OCI-LY7 (cell line): ENCODE measurements at regions of chr4 and their contacts with region 1.

Region 1: DNA sequence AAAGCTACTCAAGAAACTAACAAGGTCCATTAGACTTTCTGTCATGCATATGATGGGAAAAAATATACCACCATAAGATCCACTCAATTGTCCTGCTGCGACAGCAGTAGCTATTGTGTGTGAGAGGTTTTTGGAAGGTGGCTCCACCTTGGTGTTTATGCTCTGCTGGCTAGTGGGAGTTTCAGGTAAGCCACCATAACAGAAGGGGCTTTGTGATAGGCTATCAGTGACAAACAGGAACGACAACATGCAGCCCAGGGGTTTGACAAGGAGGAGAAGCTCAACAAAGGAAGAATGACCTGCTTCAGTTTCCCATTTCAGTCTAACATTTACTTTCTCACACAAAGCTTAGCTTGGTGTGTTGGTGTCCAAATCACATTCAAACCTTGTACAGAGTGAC is 182.6 kb downstream of the ATOH1 start:
- DNase-seq: no peak
- H3K4me3 ChIP-seq: no peak overlapping the region
- H3K27ac ChIP-seq: no peak overlapping the region
- H3K4me1 ChIP-seq: no peaks in the 10 kb centered on the region
- CTCF ChIP-seq: no peak

Region 2: DNA sequence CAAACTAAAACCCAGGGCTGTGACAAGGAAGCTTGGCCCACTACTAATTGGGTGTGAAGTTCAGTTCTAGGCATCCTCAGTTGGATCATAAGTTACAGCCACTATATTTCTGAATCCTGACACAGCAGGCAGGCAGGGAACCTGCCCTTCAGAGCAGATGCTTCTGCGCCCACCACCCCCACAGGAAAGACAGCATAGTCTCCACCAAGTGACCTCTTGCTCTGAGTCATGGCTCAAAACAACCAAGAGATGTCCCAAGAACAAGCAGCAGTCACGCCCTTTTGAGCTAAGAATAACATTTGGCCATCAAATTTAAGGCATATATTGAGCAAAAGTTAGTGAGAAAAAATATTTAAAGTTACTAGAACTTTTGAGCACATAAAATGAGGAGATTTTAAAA is 25.8 kb after region 1 on chr4:
- CTCF ChIA-PET with region 1: no interaction called
- POLR2A ChIA-PET with region 1: no interaction called
- intact Hi-C with region 1: loop called (anchors 1 kb)
- DNase-seq: no peak
- H3K4me3 ChIP-seq: no peak overlapping the region
- H3K27ac ChIP-seq: no peak overlapping the region
- H3K4me1 ChIP-seq: no peaks in the 10 kb centered on the region
- CTCF ChIP-seq: no peak

Region 3: DNA sequence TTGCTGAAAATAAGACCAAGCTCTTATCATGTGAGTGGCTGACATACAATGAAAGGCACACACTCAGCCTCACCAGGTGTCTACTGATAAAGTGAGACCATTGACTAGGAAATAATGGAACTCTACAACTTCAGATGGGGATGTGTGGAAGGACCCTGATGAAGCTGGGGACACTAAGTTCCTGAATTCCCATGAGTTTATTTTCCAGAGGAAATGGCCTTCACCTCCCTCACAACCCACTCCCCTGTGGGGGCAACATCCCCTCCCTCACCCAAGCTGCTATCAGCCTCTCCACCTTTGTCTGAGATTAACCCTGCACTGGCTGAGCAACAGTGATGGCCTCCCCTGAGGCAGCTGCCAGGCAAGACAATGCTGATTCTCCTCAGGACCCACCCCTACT is 141.3 kb after region 1 on chr4:
- CTCF ChIA-PET with region 1: no interaction called
- POLR2A ChIA-PET with region 1: no interaction called
- intact Hi-C with region 1: no loop called
- DNase-seq: no peak
- H3K4me3 ChIP-seq: no peak overlapping the region
- H3K27ac ChIP-seq: no peak overlapping the region
- H3K4me1 ChIP-seq: no peaks in the 10 kb centered on the region
- CTCF ChIP-seq: no peak

Region 4: GRCh38 chr4:94207469-94208224 is 196.5 kb after region 1 on chr4 and contains the start of gene SMARCAD1:
- CTCF ChIA-PET with region 1: no interaction called
- POLR2A ChIA-PET with region 1: no interaction called
- intact Hi-C with region 1: no loop called
- DNase-seq: peak; percentile 95
- H3K4me3 ChIP-seq: peak within 1 kb of the TSS; percentile 73
- H3K27ac ChIP-seq: peak within 1 kb of the TSS; percentile 69
- H3K4me1 ChIP-seq: peaks cover 15% of the 10 kb centered on the region
- CTCF ChIP-seq: no peak
- total RNA-seq, gene SMARCAD1: 29.9 and 33.9 TPM in 2 replicates

Region 5: GRCh38 chr4:94603170-94603747 is 592.1 kb after region 1 on chr4:
- CTCF ChIA-PET with region 1: no interaction called
- POLR2A ChIA-PET with region 1: no interaction called
- intact Hi-C with region 1: no loop called
- DNase-seq: no peak
- H3K4me3 ChIP-seq: no peak overlapping the region
- H3K27ac ChIP-seq: no peak overlapping the region
- H3K4me1 ChIP-seq: no peaks in the 10 kb centered on the region
- CTCF ChIP-seq: no peak